ENCODE measurements at regions of chr18 and their contacts with region 1.

Region 1: GRCh38 chr18:58103339-58103985 is 59.4 kb downstream of the NEDD4L start:
- DNase-seq: no peak
- H3K4me3 ChIP-seq: no peak overlapping the region
- H3K4me3 Mint-ChIP-seq: peak overlapping the region; percentile 30
- H3K27ac Mint-ChIP-seq: no peak overlapping the region
- H3K4me1 ChIP-seq: peaks cover 27% of the 10 kb centered on the region
- H3K4me1 Mint-ChIP-seq: peaks cover 8% of the 10 kb centered on the region
- H3K27me3 ChIP-seq: no peaks in the 10 kb centered on the region
- H3K27me3 Mint-ChIP-seq: no peaks in the 10 kb centered on the region
- CTCF ChIP-seq: no peak

Region 2: GRCh38 chr18:58087917-58088692 is 15.4 kb before region 1 on chr18:
- CTCF ChIA-PET with region 1: no interaction called
- POLR2A ChIA-PET with region 1: no interaction called
- intact Hi-C with region 1: loop called (anchors 1 kb)
- DNase-seq: no peak
- H3K4me3 ChIP-seq: no peak overlapping the region
- H3K4me3 Mint-ChIP-seq: no peak overlapping the region
- H3K27ac Mint-ChIP-seq: peak overlapping the region; percentile 70
- H3K4me1 ChIP-seq: peaks cover 22% of the 10 kb centered on the region
- H3K4me1 Mint-ChIP-seq: peaks cover 7% of the 10 kb centered on the region
- H3K27me3 ChIP-seq: no peaks in the 10 kb centered on the region
- H3K27me3 Mint-ChIP-seq: no peaks in the 10 kb centered on the region
- CTCF ChIP-seq: no peak

Measured in Caco-2 (cell line).